AG04449 (cell line): ENCODE measurements at regions of chr13 and their contacts with region 1.

Region 1: GRCh38 chr13:27353166-27353583 is 71.2 kb upstream of the GTF3A start:
- DNase-seq: no peak
- H3K4me3 ChIP-seq: no peak overlapping the region; the same call in 1 of the 2 replicates
- CTCF ChIP-seq: no peak

Region 2: DNA sequence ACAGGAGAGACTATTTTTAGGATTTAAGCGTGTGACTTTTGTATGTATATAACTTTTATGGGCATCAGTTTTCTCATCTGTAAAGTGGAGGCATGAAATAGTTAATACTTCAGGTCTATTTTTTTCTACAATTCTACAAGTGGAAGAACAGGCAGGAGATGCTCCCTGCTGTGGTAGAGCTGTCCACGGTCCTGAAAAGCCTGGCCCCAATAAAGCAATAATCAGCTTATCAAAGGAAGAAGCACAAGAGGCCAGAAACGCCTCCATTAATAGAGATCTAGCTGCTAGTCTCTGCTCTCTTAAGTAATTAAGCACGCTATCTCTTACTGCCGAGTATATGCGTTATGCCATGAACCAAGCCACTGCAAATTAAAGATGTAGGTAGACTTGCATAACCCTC is 823.7 kb before region 1 on chr13:
- CTCF ChIA-PET with region 1: no interaction called
- POLR2A ChIA-PET with region 1: no interaction called
- DNase-seq: peak; percentile 1
- H3K4me3 ChIP-seq: no peak overlapping the region
- CTCF ChIP-seq: no peak

Region 3: GRCh38 chr13:27339299-27339698 is 13.9 kb before region 1 on chr13:
- CTCF ChIA-PET with region 1: interaction called, 16 read pairs
- POLR2A ChIA-PET with region 1: no interaction called
- DNase-seq: no peak
- H3K4me3 ChIP-seq: no peak overlapping the region
- CTCF ChIP-seq: peak; percentile 63